ENCODE measurements at regions of chr3 and their contacts with region 1.

Region 1: DNA sequence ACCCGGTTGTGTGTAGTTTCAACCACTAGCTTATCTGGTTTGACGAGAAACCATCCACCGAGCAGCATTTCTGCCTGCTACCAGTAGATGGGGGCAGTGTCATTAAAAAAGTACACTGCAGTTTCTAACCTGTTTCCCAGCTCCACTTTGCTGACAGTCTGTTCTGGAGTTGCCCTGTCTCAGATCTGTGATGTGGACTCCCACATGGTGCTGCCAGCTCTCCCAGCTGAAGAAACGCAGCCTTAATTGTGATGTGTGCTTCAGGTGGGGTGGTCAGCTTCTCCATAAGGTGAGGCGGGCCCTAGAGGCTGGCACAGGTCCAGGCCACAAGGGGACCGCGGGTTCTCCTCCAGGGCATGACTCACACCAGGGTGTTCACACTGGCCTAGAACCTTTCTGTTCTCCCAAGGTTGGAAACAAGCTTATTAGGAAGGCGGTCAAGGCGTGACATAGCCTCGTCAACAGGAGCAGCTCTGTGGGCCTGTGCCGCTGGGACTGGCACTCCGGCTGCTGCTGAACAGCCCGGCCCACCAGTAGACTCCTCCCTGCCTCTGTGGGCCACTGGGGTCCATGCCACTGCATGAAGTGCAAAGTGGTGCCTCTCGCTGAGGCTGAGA is 2.9 kb upstream of the FAM43A start:
- DNase-seq: peak; percentile 44 to 91 (median 76)

Region 2: GRCh38 chr3:194757647-194758061 is 74.9 kb after region 1 on chr3:
- intact Hi-C with region 1: loop called (anchors 5 kb)
- DNase-seq: peak in 25 of 42 donors; percentile 22 to 68 (median 48)

Region 3: DNA sequence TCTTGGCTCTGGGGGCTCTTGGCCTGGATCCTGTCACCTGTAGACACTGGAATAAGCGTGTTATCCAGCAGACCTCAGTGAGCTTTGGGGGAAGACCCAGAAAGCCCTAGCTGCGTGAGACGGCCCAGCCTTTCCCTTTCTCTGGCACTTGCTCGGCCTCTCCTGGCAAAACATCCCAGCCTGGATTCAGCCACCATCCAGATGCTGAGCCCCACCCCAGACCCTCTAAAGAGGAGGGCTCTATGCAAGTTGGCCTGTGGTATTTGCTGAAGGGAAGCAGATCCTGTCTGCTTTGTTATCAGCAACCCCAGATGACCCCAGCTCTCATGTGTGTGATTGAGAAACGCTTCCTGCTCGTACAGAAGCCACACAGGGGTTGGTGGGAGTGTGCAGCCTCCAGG is 270.0 kb after region 1 on chr3:
- intact Hi-C with region 1: loop called (anchors 10 kb)
- DNase-seq: no peak

Region 4: DNA sequence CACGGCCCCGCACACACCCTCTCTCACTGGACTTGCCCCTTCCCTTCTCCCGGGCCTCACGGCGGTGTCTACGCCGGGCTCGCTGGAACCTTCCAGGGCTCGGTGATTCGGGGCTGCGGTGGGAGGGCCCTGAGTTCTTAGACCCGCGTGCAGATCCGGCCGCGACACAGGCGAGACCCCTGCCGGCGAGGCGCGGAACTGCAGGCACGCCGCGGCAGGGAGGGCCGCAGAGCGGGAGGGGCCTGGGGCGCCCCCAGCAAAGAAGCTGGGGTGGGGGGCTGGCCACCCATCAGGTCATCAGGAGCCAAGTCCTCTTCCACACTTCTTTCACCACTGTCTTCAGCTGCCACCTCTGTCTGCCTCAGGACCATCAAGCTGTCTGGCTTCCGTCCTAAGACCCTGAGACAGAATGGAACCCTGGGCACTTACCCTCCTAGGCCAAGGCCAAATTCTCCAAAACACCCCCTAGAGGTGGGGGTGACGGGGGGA is 423.7 kb after region 1 on chr3:
- intact Hi-C with region 1: loop called (anchors 2 kb)
- DNase-seq: peak; percentile 20 to 88 (median 70)

Region 5: GRCh38 chr3:195259475-195260279 is 576.9 kb after region 1 on chr3:
- intact Hi-C with region 1: loop called (anchors 2 kb)
- DNase-seq: peak; percentile 34 to 90 (median 77)

Region 6: DNA sequence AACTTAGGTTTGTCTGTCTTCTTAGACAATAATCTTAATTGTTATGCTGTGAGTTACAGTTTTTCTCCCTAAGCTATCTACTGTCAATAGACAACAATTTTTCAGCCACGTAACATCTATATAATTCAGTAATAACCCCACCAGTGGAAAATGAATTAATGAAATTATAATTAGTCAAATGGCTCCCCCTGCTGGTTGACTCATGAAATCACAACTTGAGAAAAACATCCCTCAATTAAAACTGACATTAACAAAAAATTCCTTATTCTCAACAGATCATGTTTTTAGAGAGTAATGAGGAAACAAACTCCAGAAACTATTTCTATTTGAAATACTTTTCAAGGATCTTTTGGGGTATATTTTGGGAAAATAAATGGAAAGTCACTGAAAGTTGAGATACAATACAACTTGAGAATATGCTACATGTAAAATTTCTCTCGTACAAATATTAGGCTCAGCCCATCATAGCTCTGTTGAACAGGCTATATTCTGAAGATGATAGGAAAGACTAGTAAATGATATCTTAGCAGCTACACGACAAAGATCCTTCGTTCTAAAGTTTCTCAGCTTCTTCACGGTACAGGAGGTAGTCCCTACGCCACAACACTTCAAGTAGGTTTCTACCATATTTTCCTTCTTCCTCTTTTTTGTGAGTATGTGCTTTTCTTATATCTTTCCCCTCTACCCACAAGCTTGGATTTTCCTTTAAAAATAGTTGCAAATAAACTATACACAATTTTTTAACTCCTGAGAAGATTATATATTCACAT is 839.6 kb after region 1 on chr3:
- intact Hi-C with region 1: loop called (anchors 5 kb)
- DNase-seq: peak in 4 of 42 donors; percentile 29 to 78 (median 40)